Activated CD4-positive, alpha-beta T cell treated with anti-CD3 and anti-CD28 coated beads for 36 hours (primary cell): ENCODE measurements at regions of chr5 and their contacts with region 1.

Region 1: GRCh38 chr5:159106569-159107282 is 7.0 kb upstream of the EBF1 start:
- DNase-seq: peak; percentile 85
- ATAC-seq: peak; percentile 80
- H3K4me3 Mint-ChIP-seq: peak overlapping the region; percentile 59
- H3K27ac Mint-ChIP-seq: no peak overlapping the region
- H3K4me1 Mint-ChIP-seq: peaks cover 24% of the 10 kb centered on the region
- H3K27me3 Mint-ChIP-seq: peaks cover 56% of the 10 kb centered on the region

Region 2: DNA sequence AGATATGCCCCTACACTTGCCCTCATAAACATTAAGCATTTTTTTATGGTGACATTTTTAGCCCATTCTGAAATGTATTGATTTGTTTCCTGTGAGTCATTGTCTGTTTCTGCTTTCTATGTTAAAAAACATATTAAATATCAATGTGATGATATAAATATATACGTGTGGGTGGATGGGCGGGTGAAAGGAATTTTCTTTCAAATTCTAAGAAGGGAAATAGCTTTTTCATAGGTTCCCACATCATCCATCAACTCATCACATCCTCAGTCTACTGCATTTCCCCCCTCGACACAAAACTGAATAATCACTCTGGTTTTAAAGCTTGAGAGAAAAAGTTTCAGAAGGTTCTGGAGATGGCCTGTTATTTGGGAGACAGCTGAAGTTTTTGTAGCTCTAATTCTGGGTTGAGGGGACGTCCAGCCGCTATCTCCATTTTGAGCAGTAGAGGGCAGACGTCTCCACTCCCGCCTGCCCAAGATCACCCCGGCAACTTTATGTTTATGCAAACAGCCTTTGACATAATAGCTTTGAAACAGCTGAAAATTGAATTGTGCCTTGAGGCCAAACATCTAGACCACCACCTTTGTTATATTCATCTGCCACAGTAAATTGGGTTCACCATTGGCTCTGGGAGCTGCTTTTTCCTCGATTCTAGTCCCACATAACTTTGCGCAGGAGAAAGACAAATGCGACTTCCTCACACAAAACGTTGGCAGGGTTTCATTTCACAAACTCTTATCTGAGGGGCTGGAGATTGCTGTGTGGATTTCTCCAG is 1031.5 kb before region 1 on chr5:
- CTCF ChIA-PET with region 1: interaction called, 11 read pairs
- POLR2A ChIA-PET with region 1: no interaction called
- intact Hi-C with region 1: loop called (anchors 1 to 10 kb)
- DNase-seq: peak; percentile 70
- ATAC-seq: peak; percentile 78
- H3K4me3 Mint-ChIP-seq: no peak overlapping the region
- H3K27ac Mint-ChIP-seq: no peak overlapping the region
- H3K4me1 Mint-ChIP-seq: peaks cover 5% of the 10 kb centered on the region
- H3K27me3 Mint-ChIP-seq: peaks cover 2% of the 10 kb centered on the region

Region 3: DNA sequence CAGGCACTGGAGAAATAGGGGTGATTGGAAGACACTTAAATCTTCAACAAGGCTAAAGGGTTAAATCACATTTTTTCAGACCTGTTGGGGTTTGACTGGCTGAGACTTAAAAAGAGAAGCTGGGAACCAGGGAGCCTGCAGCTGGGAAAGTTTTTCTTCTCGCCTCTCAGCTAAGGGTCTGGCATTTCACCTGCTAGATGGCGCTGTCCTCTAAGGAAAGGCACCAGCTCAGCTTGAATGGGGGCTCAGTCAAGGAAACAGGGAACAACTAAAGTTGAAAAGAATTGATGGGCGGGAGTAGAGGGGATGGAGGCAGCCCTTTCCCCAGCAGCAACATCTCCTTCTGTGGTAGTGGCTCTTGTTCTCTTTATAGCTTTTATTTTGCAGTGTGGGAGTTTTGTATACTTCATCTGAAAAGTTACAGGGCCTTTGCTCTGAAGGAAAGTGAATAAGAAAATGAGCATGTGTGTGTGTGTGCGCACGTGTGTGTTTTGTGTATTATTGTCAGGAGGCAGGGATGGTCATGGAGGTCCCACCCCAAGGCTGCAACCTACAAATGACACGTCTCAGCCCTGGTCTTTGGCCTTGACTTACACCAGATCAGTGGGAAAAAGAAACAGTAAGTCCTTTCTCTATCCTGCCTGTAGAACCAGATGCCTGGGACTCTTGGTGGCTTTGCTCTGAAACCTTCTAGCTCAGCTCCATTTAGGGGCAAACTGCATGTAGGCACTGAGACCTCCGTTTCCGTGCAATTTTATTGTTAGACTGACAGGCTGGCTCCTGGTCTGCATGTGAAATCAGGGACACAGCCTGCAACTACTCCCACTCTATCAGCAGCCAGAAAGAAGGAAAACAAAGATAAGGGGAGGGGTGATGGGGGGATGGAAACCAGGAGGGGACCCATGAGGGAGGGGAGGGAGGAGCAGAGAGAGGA is 931.5 kb before region 1 on chr5:
- CTCF ChIA-PET with region 1: interaction called, 25 read pairs
- POLR2A ChIA-PET with region 1: no interaction called
- intact Hi-C with region 1: loop called (anchors 1 to 2 kb)
- DNase-seq: peak; percentile 75
- ATAC-seq: peak; percentile 61
- H3K4me3 Mint-ChIP-seq: no peak overlapping the region
- H3K27ac Mint-ChIP-seq: no peak overlapping the region
- H3K4me1 Mint-ChIP-seq: no peaks in the 10 kb centered on the region
- H3K27me3 Mint-ChIP-seq: no peaks in the 10 kb centered on the region

Region 4: GRCh38 chr5:158695595-158696330 is 411.0 kb before region 1 on chr5:
- CTCF ChIA-PET with region 1: interaction called, 166 read pairs
- POLR2A ChIA-PET with region 1: no interaction called
- intact Hi-C with region 1: loop called (anchors 1 kb)
- DNase-seq: peak; percentile 80
- ATAC-seq: peak; percentile 74
- H3K4me3 Mint-ChIP-seq: no peak overlapping the region
- H3K27ac Mint-ChIP-seq: no peak overlapping the region
- H3K4me1 Mint-ChIP-seq: peaks cover 2% of the 10 kb centered on the region
- H3K27me3 Mint-ChIP-seq: no peaks in the 10 kb centered on the region

Region 5: DNA sequence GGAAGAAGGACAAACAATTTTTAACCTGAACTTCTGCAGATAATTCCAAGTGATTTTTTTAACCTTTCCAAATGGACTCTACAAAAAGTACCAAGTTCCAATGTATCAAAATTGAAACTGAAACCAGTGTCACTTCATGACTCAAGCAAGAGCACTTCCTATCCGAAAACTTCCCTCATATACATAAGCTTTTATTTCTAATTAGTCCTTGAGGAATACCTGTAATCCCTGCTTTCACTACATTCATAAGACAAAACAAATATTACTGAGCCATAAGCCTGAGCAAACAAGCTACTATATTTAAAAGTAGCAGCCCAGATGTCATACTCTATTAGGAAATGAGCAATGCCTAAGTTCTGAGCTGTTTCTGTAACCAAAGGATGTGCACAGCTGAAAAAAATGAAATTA is 231.4 kb before region 1 on chr5:
- CTCF ChIA-PET with region 1: interaction called, 3 read pairs
- POLR2A ChIA-PET with region 1: no interaction called
- intact Hi-C with region 1: loop called (anchors 5 to 10 kb)
- DNase-seq: no peak
- ATAC-seq: peak; percentile 71
- H3K4me3 Mint-ChIP-seq: peak overlapping the region; percentile 13
- H3K27ac Mint-ChIP-seq: no peak overlapping the region
- H3K4me1 Mint-ChIP-seq: peaks cover 27% of the 10 kb centered on the region
- H3K27me3 Mint-ChIP-seq: peaks cover 4% of the 10 kb centered on the region

Region 6: DNA sequence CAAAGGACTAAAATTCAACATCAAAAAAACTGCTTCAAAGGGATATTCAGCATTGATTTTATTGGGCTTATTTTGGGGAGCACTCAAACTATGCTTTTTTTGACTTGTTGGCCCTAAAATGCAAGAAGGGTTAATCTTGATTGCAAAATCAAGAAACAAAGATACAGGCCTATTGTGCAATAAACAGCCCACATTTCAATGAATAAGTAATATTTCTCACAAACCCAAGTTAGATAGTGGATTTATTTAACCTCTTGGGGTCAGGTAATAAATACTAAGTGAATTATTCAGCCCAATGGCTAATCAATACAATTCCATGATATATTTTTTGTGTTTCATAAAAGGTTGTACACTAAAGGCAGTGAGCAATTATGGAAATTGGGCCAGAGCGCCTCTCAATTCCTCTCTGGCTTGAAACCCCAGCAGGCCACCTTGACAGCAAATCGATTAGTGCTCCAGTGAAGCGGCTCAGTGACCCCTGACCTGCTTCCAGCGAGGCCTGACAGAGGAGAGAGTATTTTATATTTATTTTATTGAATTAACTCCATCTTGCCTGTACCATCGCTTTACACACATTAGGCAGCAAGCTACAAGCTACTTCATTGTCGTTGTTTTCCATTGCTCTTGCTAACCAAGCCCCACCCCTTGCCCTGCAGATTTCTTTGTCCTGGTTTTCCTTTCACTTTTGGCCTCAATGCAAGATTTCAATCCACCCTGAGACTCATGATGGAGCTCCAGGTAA is 72.5 kb before region 1 on chr5:
- CTCF ChIA-PET with region 1: no interaction called
- POLR2A ChIA-PET with region 1: no interaction called
- intact Hi-C with region 1: no loop called
- DNase-seq: no peak
- ATAC-seq: no peak
- H3K4me3 Mint-ChIP-seq: no peak overlapping the region
- H3K27ac Mint-ChIP-seq: no peak overlapping the region
- H3K4me1 Mint-ChIP-seq: peaks cover 11% of the 10 kb centered on the region
- H3K27me3 Mint-ChIP-seq: peaks cover 20% of the 10 kb centered on the region